Activated CD4-positive, alpha-beta T cell treated with anti-CD3 and anti-CD28 coated beads for 36 hours (primary cell): ENCODE measurements at regions of chr19 and their contacts with region 1.

Region 1: DNA sequence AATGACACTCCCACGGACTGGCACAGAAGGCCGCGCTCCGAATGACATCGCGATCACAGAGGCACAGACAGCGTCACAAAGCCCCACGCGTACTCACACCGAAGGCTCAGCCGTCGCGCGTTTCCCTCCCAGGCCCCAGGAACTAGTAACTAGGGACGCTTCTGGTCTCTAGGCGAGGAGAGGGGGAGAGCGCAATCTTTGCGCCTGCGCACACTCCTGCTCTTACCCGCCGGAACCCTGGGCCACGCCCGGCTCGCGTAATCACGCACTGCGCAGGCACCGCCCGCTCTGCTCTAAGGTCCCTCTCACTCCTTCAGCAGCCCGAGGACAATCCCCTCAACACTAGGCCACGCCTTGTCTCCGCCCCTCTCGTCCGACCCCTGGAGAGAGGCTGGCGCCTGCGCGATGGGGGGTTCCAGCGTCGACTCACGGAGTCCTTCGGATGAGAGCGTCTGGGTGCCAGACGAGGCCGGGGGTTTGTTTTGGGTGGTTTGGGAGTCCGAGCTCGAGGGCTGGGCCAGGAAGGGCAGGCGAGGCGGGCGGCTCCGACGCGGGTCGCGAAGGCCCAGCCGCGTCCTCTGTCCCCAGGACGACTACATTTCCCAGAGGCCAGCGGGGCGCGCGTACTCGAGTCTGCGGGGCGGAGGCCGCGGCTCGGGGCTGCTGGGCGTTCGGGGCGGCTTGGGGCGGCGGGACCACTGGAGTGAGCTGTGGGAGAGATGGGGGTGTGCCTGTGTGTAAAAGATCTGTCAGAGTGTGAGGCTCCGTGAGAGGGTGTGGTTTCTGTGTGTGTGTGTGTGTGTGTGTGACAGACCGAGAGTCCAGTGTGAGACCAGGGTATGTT is at the start of gene ZNF471:
- DNase-seq: peak; percentile 96
- ATAC-seq: peak; percentile 99
- H3K4me3 Mint-ChIP-seq: no peak within 1 kb of the TSS
- H3K27ac Mint-ChIP-seq: peak within 1 kb of the TSS; percentile 12
- H3K4me1 Mint-ChIP-seq: peaks cover 5% of the 10 kb centered on the region
- H3K27me3 Mint-ChIP-seq: peaks cover 2% of the 10 kb centered on the region
- total RNA-seq, gene ZNF471: 1.4 to 1.5 TPM

Region 2: DNA sequence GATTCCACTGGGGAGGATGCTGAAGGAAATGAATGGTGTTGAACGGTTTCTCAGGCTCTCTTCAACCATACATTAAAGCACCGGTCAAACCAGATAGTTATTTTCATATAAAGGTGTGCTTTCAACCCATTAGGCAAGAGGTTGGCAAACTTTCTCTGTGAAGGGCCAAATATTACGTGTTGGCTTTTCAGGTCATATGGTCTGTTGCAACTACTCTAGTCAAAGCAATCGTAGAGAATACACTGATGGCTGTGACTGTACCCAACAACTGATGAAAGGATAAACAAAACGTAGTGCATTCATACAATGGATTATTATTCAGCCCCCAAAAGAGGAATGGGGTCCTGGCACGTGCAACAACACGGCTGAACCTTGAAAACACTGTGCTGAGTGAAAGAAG is 198.9 kb before region 1 on chr19:
- CTCF ChIA-PET with region 1: no interaction called
- POLR2A ChIA-PET with region 1: no interaction called
- intact Hi-C with region 1: no loop called
- DNase-seq: no peak
- ATAC-seq: no peak
- H3K4me3 Mint-ChIP-seq: no peak overlapping the region
- H3K27ac Mint-ChIP-seq: no peak overlapping the region
- H3K4me1 Mint-ChIP-seq: peaks cover 16% of the 10 kb centered on the region
- H3K27me3 Mint-ChIP-seq: no peaks in the 10 kb centered on the region

Region 3: GRCh38 chr19:56477429-56478338 is 30.0 kb before region 1 on chr19:
- CTCF ChIA-PET with region 1: no interaction called
- POLR2A ChIA-PET with region 1: no interaction called
- intact Hi-C with region 1: loop called in 1 of 2 experiments (anchors 1 kb)
- DNase-seq: peak; percentile 86
- ATAC-seq: peak; percentile 87
- H3K4me3 Mint-ChIP-seq: peak overlapping the region; percentile 85
- H3K27ac Mint-ChIP-seq: peak overlapping the region; percentile 94
- H3K4me1 Mint-ChIP-seq: peaks cover 15% of the 10 kb centered on the region
- H3K27me3 Mint-ChIP-seq: peaks cover 13% of the 10 kb centered on the region

Region 4: DNA sequence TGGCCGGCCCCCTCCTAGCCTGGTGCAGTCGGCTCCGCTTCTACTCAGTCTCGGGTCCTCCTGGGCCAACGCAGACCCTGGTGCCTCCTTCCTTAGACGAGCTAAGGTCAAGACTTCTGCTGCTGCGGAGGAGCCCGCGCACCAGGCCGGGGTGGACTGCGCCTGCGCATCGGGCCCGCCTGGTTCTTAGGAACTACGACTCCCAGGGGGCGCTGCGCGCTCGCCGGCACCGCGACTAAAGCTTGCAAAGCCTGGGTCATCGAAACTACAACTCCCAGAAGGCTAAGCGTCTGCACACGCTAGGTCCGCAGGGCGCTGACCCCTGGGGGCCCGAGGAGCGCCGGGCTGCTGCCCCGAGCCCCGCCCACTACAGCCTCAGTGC is 163.9 kb after region 1 on chr19 and contains the start of gene ZNF835:
- CTCF ChIA-PET with region 1: no interaction called
- POLR2A ChIA-PET with region 1: no interaction called
- intact Hi-C with region 1: loop called in 1 of 2 experiments (anchors 2 kb)
- DNase-seq: peak; percentile 94
- ATAC-seq: peak; percentile 96
- H3K4me3 Mint-ChIP-seq: peak within 1 kb of the TSS; percentile 84
- H3K27ac Mint-ChIP-seq: peak within 1 kb of the TSS; percentile 87
- H3K4me1 Mint-ChIP-seq: peaks cover 11% of the 10 kb centered on the region
- H3K27me3 Mint-ChIP-seq: no peaks in the 10 kb centered on the region
- total RNA-seq, gene ZNF835: 2.8 to 4.5 TPM